PC-3 (cell line): ENCODE measurements at regions of chr1 and their contacts with region 1.

Region 1: GRCh38 chr1:155961937-155962336 is 16.4 kb downstream of the ARHGEF2 start:
- DNase-seq: peak; percentile 100
- ATAC-seq: peak; percentile 98
- H3K4me3 ChIP-seq: 0 out of 2 replicates have a peak overlapping the region, but pooled peaks have one; percentile 5
- H3K27ac ChIP-seq: peak overlapping the region; percentile 93
- H3K4me1 ChIP-seq: peaks cover 32% of the 10 kb centered on the region
- H3K27me3 ChIP-seq: no peaks in the 10 kb centered on the region
- CTCF ChIP-seq: peak; percentile 52

Region 2: DNA sequence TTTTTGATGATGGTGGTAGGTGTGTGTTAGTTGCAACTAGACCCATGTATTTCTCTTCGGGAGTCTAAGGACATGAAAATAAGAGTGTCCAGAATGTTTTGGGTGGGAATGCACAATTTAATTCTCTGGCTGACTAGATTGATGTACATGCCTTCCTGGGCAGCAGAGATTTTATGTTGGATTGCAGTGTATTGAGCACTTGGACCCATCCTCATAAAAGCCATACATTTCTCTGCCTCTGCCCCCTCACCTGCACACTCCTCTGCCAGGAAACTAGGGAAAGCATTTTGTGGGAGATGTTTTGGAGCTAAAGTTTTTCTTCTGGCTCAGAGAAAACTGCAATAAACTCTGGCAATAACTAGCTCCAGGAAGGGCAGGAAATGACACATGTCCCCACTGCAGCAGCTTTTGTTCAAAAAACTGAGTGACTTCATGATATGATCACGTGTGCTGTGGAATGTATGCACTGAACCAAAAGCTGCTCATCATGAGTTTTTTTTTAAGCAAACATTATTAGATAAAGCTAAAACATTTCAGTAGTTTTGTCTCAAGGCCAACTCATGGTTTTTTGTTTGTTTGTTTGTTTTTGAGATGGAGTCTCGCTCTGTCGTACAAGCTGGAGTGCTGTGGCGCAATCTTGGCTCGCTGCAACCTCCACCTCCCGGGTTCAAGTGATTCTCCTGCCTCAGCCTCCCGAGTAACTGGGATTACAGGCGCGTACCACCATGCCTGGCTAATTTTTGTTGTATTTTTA is 68.4 kb before region 1 on chr1:
- CTCF ChIA-PET with region 1: no interaction called
- POLR2A ChIA-PET with region 1: no interaction called
- intact Hi-C with region 1: no loop called
- DNase-seq: peak; percentile 97
- ATAC-seq: peak; percentile 86
- H3K4me3 ChIP-seq: peak overlapping the region; percentile 46
- H3K27ac ChIP-seq: peak overlapping the region; percentile 91
- H3K4me1 ChIP-seq: peaks cover 30% of the 10 kb centered on the region
- H3K27me3 ChIP-seq: no peaks in the 10 kb centered on the region
- CTCF ChIP-seq: no peak

Region 3: GRCh38 chr1:155946633-155947219 is 15.2 kb before region 1 on chr1:
- CTCF ChIA-PET with region 1: no interaction called
- POLR2A ChIA-PET with region 1: interaction called, 12 read pairs
- intact Hi-C with region 1: no loop called
- DNase-seq: no peak
- ATAC-seq: no peak
- H3K4me3 ChIP-seq: no peak overlapping the region
- H3K27ac ChIP-seq: no peak overlapping the region
- H3K4me1 ChIP-seq: peaks cover 14% of the 10 kb centered on the region
- H3K27me3 ChIP-seq: no peaks in the 10 kb centered on the region
- CTCF ChIP-seq: no peak

Region 4: GRCh38 chr1:156371553-156372264 is 409.8 kb after region 1 on chr1:
- CTCF ChIA-PET with region 1: no interaction called
- POLR2A ChIA-PET with region 1: no interaction called
- intact Hi-C with region 1: no loop called
- DNase-seq: peak; percentile 29
- ATAC-seq: no peak
- H3K4me3 ChIP-seq: no peak overlapping the region
- H3K27ac ChIP-seq: no peak overlapping the region
- H3K4me1 ChIP-seq: peaks cover 5% of the 10 kb centered on the region; the same call in 1 of the 2 replicates
- H3K27me3 ChIP-seq: no peaks in the 10 kb centered on the region
- CTCF ChIP-seq: no peak